ENCODE measurements at regions of chr11 and their contacts with region 1.

Region 1: GRCh38 chr11:8671193-8671612 is 11.3 kb downstream of the TRIM66 start:
- DNase-seq: peak; percentile 80
- ATAC-seq: peak; percentile 99
- H3K4me3 ChIP-seq: no peak overlapping the region
- H3K27ac ChIP-seq: peak overlapping the region; percentile 61
- H3K4me1 ChIP-seq: peaks cover 18% of the 10 kb centered on the region
- H3K27me3 ChIP-seq: no peaks in the 10 kb centered on the region
- CTCF ChIP-seq: no peak

Region 2: GRCh38 chr11:8652140-8652539 is 19.1 kb before region 1 on chr11:
- CTCF ChIA-PET with region 1: no interaction called
- POLR2A ChIA-PET with region 1: interaction called, 16 read pairs
- intact Hi-C with region 1: no loop called
- DNase-seq: peak; percentile 58
- ATAC-seq: peak; percentile 38; the same call in 1 of the 2 replicates
- H3K4me3 ChIP-seq: no peak overlapping the region
- H3K27ac ChIP-seq: no peak overlapping the region
- H3K4me1 ChIP-seq: peaks cover 6% of the 10 kb centered on the region; the same call in 1 of the 2 replicates
- H3K27me3 ChIP-seq: no peaks in the 10 kb centered on the region
- CTCF ChIP-seq: no peak

Region 3: DNA sequence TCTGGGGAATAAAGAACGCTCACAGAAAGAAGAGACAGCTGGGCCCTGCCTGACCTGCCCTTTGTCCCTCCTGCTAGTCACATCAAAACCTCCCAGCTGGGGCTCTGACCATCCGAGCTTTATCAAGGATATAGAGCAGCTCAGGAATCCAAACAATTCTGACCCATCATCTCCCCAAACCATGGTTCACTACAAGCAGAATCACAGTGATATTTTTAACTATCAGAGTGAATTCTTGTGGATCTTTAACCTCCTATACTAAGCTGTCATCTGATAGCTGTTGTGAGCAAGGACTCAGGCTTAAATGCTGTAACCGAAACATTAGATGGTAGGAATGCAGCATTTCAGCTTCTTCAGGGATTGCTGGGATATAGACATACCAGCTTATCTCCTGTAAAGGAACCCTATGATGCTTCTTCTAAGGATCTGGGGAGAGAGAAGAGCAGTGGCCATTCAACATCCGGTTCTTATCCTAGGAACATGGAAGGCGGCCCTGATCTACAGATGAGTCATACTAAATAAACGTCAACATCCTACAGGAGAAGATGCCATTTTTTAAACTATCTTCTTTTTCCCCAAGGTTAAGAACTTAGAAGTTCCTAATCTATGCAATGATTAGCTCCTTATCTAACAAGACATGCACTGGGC is 155.1 kb after region 1 on chr11:
- CTCF ChIA-PET with region 1: no interaction called
- POLR2A ChIA-PET with region 1: no interaction called
- intact Hi-C with region 1: no loop called
- DNase-seq: peak; percentile 36
- ATAC-seq: peak; percentile 78
- H3K4me3 ChIP-seq: no peak overlapping the region
- H3K27ac ChIP-seq: no peak overlapping the region
- H3K4me1 ChIP-seq: peaks cover 9% of the 10 kb centered on the region
- H3K27me3 ChIP-seq: no peaks in the 10 kb centered on the region
- CTCF ChIP-seq: no peak

Measured in PC-3 (cell line).